ENCODE measurements at regions of chr2 and their contacts with region 1.

Region 1: DNA sequence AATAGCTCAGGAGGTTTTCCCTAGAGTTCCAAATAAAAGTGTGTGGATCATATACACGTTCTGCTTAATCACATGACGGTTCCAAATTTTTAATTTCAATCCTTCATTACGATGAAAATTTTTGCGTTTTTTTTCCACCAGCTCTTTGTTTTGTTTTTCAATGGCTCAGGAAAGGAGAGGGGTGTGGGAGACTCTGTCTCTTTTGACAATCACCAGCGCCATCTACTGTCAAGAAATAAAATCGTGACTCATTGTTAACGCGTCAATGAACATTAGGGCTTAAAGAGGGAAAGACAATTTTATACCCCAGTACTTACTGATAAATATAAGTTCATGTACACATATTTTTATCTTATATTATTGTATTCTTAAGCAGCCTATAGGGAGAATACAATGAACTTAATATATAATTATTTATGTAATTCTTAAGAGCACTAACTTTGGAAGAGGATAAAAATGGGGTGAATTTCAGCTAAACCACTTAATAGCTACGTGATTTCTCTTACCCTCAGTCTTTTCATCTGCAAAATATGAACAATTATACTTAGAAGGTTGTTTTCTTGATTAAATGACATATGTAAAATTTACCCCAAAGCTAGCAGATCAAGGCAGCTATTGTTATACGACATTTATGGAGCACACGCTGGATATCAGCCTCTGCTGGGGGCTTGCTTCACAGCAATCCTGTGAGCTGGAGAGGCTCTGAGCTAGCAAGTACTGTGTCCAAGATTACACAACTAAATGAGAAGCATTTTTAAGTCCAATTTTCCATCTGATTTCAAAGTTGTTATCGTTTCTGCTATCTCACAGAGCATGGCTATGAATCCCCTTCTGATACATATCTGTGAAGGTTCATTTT is 47.4 kb upstream of the RMDN2 start:
- DNase-seq: peak; percentile 76
- ATAC-seq: peak; percentile 43
- H3K4me3 ChIP-seq: no peak overlapping the region
- H3K4me3 Mint-ChIP-seq: no peak overlapping the region
- H3K27ac ChIP-seq: no peak overlapping the region
- H3K27ac Mint-ChIP-seq: no peak overlapping the region
- H3K4me1 ChIP-seq: no peaks in the 10 kb centered on the region
- H3K4me1 Mint-ChIP-seq: no peaks in the 10 kb centered on the region
- H3K27me3 ChIP-seq: peaks cover 0 to 6% (median 2%) of the 10 kb centered on the region in 4 experiments
- H3K27me3 Mint-ChIP-seq: peaks cover 31% of the 10 kb centered on the region
- CTCF ChIP-seq: peak; percentile 97

Region 2: GRCh38 chr2:37168217-37168981 is 709.3 kb before region 1 on chr2:
- CTCF ChIA-PET with region 1: interaction called, 20 read pairs
- POLR2A ChIA-PET with region 1: no interaction called
- intact Hi-C with region 1: loop called (anchors 5 kb)
- DNase-seq: peak; percentile 59
- ATAC-seq: peak; percentile 64
- H3K4me3 ChIP-seq: no peak overlapping the region
- H3K4me3 Mint-ChIP-seq: no peak overlapping the region
- H3K27ac ChIP-seq: no peak overlapping the region
- H3K27ac Mint-ChIP-seq: no peak overlapping the region
- H3K4me1 ChIP-seq: no peaks in the 10 kb centered on the region
- H3K4me1 Mint-ChIP-seq: peaks cover 2% of the 10 kb centered on the region
- H3K27me3 ChIP-seq: no peaks in the 10 kb centered on the region
- H3K27me3 Mint-ChIP-seq: no peaks in the 10 kb centered on the region
- CTCF ChIP-seq: peak; percentile 83

Region 3: GRCh38 chr2:37287966-37288365 is 589.7 kb before region 1 on chr2:
- CTCF ChIA-PET with region 1: interaction called, 3 read pairs
- POLR2A ChIA-PET with region 1: no interaction called
- intact Hi-C with region 1: loop called (anchors 1 kb)
- DNase-seq: peak; percentile 34
- ATAC-seq: peak; percentile 54
- H3K4me3 ChIP-seq: no peak overlapping the region
- H3K4me3 Mint-ChIP-seq: no peak overlapping the region
- H3K27ac ChIP-seq: no peak overlapping the region
- H3K27ac Mint-ChIP-seq: no peak overlapping the region
- H3K4me1 ChIP-seq: no peaks in the 10 kb centered on the region
- H3K4me1 Mint-ChIP-seq: peaks cover 14% of the 10 kb centered on the region
- H3K27me3 ChIP-seq: no peaks in the 10 kb centered on the region
- H3K27me3 Mint-ChIP-seq: no peaks in the 10 kb centered on the region
- CTCF ChIP-seq: no peak

Region 4: GRCh38 chr2:37414470-37414949 is 463.2 kb before region 1 on chr2:
- CTCF ChIA-PET with region 1: interaction called, 78 read pairs
- POLR2A ChIA-PET with region 1: no interaction called
- intact Hi-C with region 1: loop called (anchors 1 kb)
- DNase-seq: peak; percentile 68
- ATAC-seq: peak; percentile 76
- H3K4me3 ChIP-seq: no peak overlapping the region
- H3K4me3 Mint-ChIP-seq: no peak overlapping the region
- H3K27ac ChIP-seq: no peak overlapping the region
- H3K27ac Mint-ChIP-seq: no peak overlapping the region
- H3K4me1 ChIP-seq: no peaks in the 10 kb centered on the region
- H3K4me1 Mint-ChIP-seq: peaks cover 6% of the 10 kb centered on the region
- H3K27me3 ChIP-seq: no peaks in the 10 kb centered on the region
- H3K27me3 Mint-ChIP-seq: no peaks in the 10 kb centered on the region
- CTCF ChIP-seq: peak; percentile 87

Region 5: DNA sequence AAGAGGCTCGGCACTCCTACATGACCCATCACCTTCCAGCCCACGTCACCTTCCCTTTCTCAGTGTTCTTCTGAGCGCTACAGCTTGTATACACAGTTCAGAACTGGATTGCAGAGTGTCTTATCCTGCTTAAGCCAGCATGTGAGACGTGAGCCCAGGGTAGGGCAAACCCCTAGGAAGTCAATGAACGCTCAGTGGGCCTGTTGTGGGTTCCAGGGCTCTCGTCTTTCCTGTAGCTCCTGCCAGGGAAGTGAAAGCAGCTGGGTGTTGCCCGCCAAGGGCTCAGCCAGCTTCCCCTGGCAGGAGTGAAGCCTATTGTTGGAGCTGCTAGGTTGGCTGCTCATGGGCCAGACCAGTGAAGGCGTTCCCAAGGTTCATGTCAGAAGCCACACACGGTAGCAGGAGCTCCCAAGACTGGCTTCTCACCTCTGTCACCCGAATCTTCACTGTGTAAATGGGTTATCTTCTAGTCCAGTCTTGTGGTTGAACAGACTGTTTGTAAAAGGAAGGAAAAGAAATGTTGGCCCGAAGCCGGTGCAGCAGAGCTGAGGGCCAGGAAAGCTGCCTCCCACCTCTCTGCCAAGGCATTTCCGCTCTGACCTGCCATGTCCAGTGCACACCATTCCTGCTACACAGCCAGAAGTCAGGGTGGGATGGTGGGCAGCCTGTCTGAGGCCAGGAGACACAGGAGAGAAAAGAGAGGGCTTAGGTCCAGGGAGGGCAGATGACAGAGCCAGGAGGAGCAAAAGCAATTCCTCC is 22.2 kb before region 1 on chr2:
- CTCF ChIA-PET with region 1: interaction called, 12 read pairs
- POLR2A ChIA-PET with region 1: no interaction called
- intact Hi-C with region 1: no loop called
- DNase-seq: peak; percentile 50
- ATAC-seq: no peak
- H3K4me3 ChIP-seq: no peak overlapping the region
- H3K4me3 Mint-ChIP-seq: no peak overlapping the region
- H3K27ac ChIP-seq: no peak overlapping the region
- H3K27ac Mint-ChIP-seq: no peak overlapping the region
- H3K4me1 ChIP-seq: peaks cover 39 to 54% of the 10 kb centered on the region in 2 donors
- H3K4me1 Mint-ChIP-seq: peaks cover 27% of the 10 kb centered on the region
- H3K27me3 ChIP-seq: peaks cover 0 to 4% (median 0%) of the 10 kb centered on the region in 4 experiments
- H3K27me3 Mint-ChIP-seq: peaks cover 3% of the 10 kb centered on the region
- CTCF ChIP-seq: no peak

Region 6: DNA sequence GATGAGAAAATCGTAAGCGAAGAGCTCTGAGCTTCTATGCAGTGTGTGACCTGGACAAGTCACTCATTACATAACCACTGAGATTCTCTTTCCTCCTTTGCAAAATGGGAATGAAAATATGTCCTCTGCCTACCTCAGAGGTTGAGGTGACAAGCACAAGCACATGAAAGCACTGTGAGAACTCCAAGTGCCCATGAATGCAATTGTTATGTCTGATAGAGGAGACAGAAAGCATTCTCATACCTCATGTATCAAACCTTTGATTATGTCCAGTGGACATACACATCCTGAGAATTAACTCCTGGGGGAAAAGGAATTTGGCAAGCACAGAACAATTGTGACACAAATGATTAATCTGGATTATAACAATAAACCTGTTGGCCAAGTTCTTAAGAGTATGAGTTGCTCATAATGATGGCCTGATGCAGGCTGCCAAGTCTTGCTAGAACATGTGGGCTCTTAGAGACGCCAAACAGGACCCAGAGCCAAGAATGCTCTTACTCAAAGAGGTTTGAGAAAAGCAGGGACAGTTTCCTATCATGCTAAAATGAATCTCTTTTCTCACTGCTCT is 38.9 kb after region 1 on chr2:
- CTCF ChIA-PET with region 1: no interaction called
- POLR2A ChIA-PET with region 1: no interaction called
- intact Hi-C with region 1: no loop called
- DNase-seq: no peak
- ATAC-seq: no peak
- H3K4me3 ChIP-seq: no peak overlapping the region
- H3K4me3 Mint-ChIP-seq: no peak overlapping the region
- H3K27ac ChIP-seq: no peak overlapping the region
- H3K27ac Mint-ChIP-seq: no peak overlapping the region
- H3K4me1 ChIP-seq: no peaks in the 10 kb centered on the region
- H3K4me1 Mint-ChIP-seq: no peaks in the 10 kb centered on the region
- H3K27me3 ChIP-seq: peaks cover 0 to 4% (median 0%) of the 10 kb centered on the region in 4 experiments
- H3K27me3 Mint-ChIP-seq: peaks cover 7% of the 10 kb centered on the region
- CTCF ChIP-seq: no peak

Region 7: GRCh38 chr2:38498045-38498481 is 620.4 kb after region 1 on chr2:
- CTCF ChIA-PET with region 1: no interaction called
- POLR2A ChIA-PET with region 1: no interaction called
- intact Hi-C with region 1: no loop called
- DNase-seq: peak; percentile 62
- ATAC-seq: peak; percentile 95
- H3K4me3 ChIP-seq: peak overlapping the region in 1 of 5 experiments; percentile 3
- H3K4me3 Mint-ChIP-seq: peak overlapping the region; percentile 48
- H3K27ac ChIP-seq: peak overlapping the region in 1 of 2 donors; percentile 49
- H3K27ac Mint-ChIP-seq: peak overlapping the region; percentile 67
- H3K4me1 ChIP-seq: peaks cover 10 to 21% of the 10 kb centered on the region in 2 donors
- H3K4me1 Mint-ChIP-seq: peaks cover 15% of the 10 kb centered on the region
- H3K27me3 ChIP-seq: peaks cover 0 to 4% (median 0%) of the 10 kb centered on the region in 4 experiments
- H3K27me3 Mint-ChIP-seq: peaks cover 9% of the 10 kb centered on the region
- CTCF ChIP-seq: no peak

Measured in B cell (primary cell).